Dorsolateral prefrontal cortex (tissue), 120 donors: ENCODE measurements at regions of chr5 and their contacts with region 1.

Region 1: DNA sequence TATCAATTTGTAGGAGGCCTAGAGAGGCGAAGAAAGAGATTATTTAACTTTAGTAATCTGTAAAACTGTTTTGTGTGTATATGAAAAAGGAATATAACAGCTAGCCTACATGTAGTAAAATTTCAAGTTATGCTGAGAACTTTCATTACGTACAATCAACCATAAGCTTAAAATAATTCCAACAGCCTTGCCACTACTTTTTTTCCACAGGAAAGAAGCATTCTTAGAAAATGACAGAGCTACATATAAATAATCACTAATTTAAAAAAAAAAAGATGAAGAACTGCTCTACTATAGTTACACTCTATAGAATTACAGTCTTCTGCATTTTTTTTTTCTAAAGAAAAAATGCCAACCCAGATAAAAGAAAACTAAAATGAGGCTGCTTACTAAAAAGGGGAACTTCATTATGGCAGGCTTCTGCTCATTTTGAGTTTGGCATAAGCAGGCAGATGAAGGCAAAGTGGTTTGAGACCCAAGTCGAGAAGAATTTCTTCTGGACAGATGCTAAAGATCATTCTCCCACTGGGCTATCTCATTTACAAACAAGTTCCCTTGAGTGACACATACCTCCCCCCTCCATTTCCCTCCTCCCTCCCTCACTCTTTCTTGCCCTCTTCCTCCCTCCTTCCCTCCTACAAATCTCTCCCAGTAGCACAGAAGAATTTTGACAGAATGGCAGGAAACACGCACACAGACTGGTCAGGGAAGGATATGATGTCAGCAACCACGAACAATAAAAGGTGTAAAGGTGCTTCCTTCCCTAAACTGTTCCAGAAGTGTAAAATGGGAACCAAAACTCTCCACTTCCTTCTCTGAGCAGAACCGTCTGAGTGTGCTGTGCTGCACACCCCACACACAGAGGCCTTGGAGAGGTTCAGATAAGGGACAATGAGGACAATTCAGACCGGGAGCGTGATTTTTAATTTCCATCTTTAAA is 56.1 kb downstream of the MEF2C start:
- DNase-seq: no peak
- H3K4me3 ChIP-seq: peak overlapping the region in 39 of 59 donors; percentile 0 to 54 (median 27)
- H3K27ac ChIP-seq: peak overlapping the region in 58 of 59 donors; percentile 13 to 94 (median 77)
- H3K27me3 ChIP-seq: no peaks in the 10 kb centered on the region
- CTCF ChIP-seq: no peak

Region 2: GRCh38 chr5:88875341-88876234 is 48.7 kb after region 1 on chr5:
- intact Hi-C with region 1: loop called in 1 of 2 experiments (anchors 10 kb)
- DNase-seq: no peak
- H3K4me3 ChIP-seq: peak overlapping the region in 58 of 59 donors; percentile 10 to 89 (median 77)
- H3K27ac ChIP-seq: peak overlapping the region in 52 of 59 donors; percentile 2 to 99 (median 72)
- H3K27me3 ChIP-seq: no peaks in the 10 kb centered on the region
- CTCF ChIP-seq: no peak